Posterior vena cava (tissue), 2 donors: ENCODE measurements at regions of chr2 and their contacts with region 1.

Region 1: DNA sequence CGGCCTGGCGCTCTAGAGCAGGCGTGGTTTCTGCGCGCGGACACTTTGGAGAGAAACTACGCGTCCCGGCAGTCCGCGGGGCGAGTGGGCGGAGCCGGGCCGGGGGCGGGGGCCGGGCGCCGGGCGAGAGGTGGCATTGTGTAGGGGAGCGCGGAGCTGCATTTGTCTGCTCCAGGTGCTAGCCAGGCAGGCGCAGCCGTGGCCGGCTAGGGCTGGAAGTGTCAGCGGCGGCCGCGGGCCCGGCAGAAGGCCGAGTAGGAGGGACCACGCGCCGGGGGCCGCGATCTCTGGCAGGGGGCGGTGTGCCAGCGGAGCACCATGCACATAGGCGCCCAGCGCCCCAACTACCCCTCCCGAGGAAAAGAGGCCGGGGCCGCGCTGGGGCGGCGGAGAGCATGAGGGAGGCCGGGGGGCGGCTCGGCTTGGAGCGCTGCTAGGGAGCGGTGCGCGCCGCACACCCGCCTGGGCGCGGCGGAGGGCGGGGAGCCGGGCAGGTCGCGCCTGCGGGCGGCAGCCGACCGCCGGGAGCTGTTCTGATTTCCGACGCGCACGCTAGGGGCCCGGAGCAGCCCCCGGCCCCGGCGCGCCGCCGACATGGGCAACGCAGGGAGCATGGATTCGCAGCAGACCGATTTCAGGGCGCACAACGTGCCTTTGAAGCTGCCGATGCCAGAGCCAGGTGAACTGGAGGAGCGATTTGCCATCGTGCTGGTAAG is at the start of gene FMNL2:
- DNase-seq: peak; percentile 94
- total RNA-seq, gene FMNL2: 35.5 to 45.0 TPM

Region 2: GRCh38 chr2:152222975-152223637 is 112.1 kb before region 1 on chr2:
- intact Hi-C with region 1: loop called in 1 of 2 experiments (anchors 10 kb)
- DNase-seq: no peak

Region 3: DNA sequence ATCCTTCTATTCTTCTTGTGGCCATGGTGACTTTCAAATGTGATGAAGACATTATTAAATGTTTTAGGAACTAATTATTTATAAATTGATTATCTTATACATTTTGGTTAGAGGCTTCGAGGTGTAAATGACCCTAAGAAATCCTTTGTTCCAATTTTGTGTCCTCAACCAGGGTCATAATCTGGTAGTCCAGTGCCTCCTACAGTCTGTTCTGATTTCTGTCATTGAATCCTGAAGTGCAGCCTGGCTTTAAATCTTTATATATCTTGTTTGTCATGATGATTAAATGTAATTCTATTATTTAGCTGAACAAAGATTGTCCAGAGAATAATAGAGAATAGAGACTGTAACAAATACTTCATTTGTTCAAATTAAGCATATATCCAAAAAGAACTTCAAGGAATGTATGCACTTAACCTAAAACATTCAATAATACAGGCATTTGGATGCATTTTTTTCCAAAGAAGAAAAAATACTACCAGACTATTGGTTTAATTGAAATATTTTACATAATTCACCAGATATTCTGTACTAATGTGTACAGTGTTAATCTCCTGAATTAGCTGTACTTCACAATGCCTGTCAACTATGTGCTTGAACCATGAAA is 292.3 kb after region 1 on chr2:
- intact Hi-C with region 1: loop called in 1 of 2 experiments (anchors 10 kb)
- DNase-seq: no peak

Region 4: DNA sequence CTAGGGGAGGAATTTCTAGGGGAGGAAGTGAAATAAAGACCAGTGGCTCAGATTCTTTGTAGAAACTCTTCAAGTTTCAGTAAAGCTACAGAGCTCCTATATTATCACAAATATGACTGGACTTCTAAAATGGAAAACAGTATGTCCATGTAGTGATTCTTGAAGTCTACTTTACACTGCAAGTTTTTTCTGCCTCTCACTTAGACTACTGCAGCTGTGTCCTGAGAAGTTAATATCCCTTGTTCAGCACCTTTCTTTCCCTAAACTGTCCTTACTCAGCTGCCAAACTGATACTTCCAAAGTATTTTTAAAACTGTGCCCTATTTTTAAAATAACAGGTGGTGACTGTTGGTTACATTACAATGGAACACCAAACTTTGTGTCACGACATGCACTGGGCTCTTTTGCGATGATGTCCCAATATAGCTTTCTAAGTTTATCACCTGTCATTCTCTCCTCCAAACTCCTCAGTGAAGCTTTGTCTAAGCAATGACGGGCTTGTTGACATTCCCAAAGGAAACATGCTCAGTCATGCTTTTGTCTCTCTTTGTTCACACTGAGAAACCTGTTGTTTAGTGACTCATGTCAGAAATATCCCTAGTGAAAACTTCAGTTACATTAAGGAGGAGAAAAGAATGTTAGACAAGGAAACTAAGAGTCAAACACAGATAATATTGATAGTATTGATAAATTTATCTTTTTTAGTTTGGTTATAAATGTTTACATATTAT is 724.3 kb after region 1 on chr2:
- intact Hi-C with region 1: no loop called
- DNase-seq: no peak